PC-3 (cell line): ENCODE measurements at regions of chr2 and their contacts with region 1.

Region 1: GRCh38 chr2:9799665-9800632 is 43.3 kb upstream of the TAF1B start:
- DNase-seq: peak; percentile 93
- ATAC-seq: peak; percentile 72
- H3K4me3 ChIP-seq: no peak overlapping the region
- H3K27ac ChIP-seq: peak overlapping the region; percentile 97
- H3K4me1 ChIP-seq: peaks cover 63% of the 10 kb centered on the region
- H3K27me3 ChIP-seq: no peaks in the 10 kb centered on the region
- CTCF ChIP-seq: peak; percentile 97

Region 2: DNA sequence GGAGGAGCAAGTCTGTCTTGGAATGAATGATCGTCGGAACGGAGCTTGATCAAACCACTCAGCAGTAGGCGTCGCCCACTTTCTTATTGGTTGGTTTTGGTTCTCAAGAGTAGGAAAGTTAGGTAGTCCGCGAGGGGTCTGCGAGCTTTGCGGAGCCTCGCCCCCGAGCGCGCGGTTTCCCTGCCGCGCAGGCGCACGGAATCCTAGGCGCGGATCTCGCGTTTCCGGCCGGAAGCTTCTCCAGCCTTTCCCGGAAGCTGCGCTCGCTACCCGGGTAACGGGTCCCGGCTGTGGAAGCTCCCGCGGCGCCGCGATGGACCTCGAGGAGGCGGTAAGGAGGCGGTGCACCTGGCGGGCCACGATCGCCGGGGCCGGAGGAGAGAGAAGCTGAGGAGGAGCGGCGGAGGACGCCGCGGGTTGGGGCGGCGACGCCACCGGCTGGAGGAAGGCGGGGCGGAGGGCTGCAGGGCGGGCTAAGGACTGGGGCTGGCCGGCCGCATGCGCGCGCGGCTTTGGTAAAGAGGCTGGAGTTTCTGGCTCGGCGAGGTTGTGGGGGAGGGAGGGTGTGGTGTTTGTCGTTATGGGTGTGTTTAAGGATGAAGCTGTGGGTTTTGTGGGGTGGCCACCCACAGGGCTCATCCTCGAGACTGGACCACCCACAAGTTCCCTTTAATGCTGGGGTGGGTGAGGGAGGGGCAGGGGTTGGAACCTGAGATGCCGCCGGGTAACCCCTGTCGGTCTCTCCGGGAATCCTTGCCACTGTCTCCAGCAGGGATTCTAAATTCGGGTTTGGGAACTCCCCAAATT is 43.5 kb after region 1 on chr2 and contains the start of gene TAF1B:
- CTCF ChIA-PET with region 1: interaction called, 3 read pairs
- POLR2A ChIA-PET with region 1: no interaction called
- intact Hi-C with region 1: loop called (anchors 5 kb)
- DNase-seq: peak; percentile 96
- ATAC-seq: peak; percentile 78
- H3K4me3 ChIP-seq: peak within 1 kb of the TSS; percentile 75
- H3K27ac ChIP-seq: peak within 1 kb of the TSS; percentile 88
- H3K4me1 ChIP-seq: peaks cover 35% of the 10 kb centered on the region
- H3K27me3 ChIP-seq: no peaks in the 10 kb centered on the region
- CTCF ChIP-seq: 0 out of 2 replicates have a peak, but pooled peaks have one; percentile 30
- total RNA-seq, gene TAF1B: 24.1 and 39.5 TPM in 2 replicates

Region 3: GRCh38 chr2:9914384-9915065 is 114.6 kb after region 1 on chr2:
- CTCF ChIA-PET with region 1: no interaction called
- POLR2A ChIA-PET with region 1: no interaction called
- intact Hi-C with region 1: loop called (anchors 1 kb)
- DNase-seq: peak; percentile 92
- ATAC-seq: peak; percentile 100
- H3K4me3 ChIP-seq: no peak overlapping the region
- H3K27ac ChIP-seq: 0 out of 2 replicates have a peak overlapping the region, but pooled peaks have one; percentile 17
- H3K4me1 ChIP-seq: peaks cover 11% of the 10 kb centered on the region
- H3K27me3 ChIP-seq: no peaks in the 10 kb centered on the region
- CTCF ChIP-seq: peak; percentile 72

Region 4: DNA sequence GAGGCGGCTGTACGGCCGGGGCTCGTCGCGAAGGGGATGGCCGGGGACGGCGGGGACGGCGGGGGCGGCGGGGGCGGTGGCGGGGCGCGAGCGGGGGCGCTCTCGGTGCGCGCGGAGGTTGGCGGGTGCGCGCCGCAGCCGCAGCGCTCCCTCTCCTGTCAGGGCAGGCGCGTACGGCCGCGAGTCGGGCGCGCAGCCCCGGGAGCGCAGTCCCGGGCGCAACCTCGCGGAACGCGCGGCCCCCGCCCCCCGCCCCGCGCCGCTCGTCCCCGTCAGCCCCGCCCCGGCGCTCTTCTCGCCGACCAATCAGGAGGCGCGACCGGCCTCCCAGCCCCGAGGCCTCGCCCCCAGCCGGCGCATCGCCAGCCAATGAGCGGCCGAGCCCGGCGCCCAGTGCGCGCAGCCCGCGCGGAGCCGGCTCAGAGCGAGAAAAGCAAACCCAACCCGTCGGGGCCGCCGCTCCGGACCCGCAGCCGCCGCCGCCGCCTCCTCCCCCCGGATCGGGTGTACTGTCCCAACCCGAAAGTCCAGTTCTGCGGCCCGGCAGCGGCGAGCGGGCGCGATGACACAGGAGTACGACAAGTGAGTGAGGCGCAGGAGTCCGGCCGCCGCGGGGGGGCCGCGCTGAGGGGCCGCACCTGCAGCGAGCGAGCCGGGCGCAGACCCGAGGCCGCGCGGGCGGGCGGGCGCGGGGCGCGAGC is 151.5 kb after region 1 on chr2 and contains the start of gene GRHL1:
- CTCF ChIA-PET with region 1: no interaction called
- POLR2A ChIA-PET with region 1: no interaction called
- intact Hi-C with region 1: loop called (anchors 5 kb)
- DNase-seq: peak; percentile 95
- ATAC-seq: peak; percentile 83
- H3K4me3 ChIP-seq: peak within 1 kb of the TSS; percentile 76
- H3K27ac ChIP-seq: no peak within 1 kb of the TSS
- H3K4me1 ChIP-seq: peaks cover 29% of the 10 kb centered on the region
- H3K27me3 ChIP-seq: no peaks in the 10 kb centered on the region
- CTCF ChIP-seq: no peak
- total RNA-seq, gene GRHL1: 9.3 and 10.3 TPM in 2 replicates

Region 5: DNA sequence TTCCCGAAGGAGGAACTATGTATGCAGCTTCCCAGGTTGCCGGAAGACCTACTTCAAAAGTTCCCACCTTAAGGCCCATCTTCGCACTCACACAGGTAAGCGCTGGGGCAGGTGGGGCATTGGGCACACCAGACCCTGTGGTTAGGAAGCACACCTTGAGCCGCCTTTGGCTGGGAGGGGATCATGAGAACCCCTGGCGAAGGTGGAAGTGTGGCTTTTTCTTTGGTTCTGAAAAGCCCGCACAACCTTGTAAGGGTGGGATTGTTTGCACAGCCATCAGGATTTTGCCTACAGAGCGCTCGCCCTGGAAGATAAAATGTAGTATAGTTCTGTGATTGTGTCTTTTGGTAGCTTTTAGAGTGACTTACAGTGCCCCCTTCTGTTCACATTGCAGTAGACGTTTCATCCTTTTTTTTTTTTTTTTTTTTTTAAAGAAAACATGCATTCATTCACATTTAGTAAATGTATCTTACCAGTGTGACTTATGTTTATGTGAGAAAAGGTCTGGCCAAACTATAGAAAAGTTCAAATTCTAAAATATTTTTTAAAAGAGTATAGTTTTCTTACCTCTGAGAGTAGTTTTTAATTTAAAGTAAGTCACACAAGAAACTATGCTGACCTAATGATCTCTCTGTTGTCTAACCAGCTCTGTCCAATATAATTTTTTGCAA is 248.7 kb after region 1 on chr2:
- CTCF ChIA-PET with region 1: no interaction called
- POLR2A ChIA-PET with region 1: no interaction called
- intact Hi-C with region 1: loop called (anchors 1 kb)
- DNase-seq: peak; percentile 55
- ATAC-seq: no peak
- H3K4me3 ChIP-seq: no peak overlapping the region
- H3K27ac ChIP-seq: no peak overlapping the region
- H3K4me1 ChIP-seq: peaks cover 5% of the 10 kb centered on the region
- H3K27me3 ChIP-seq: no peaks in the 10 kb centered on the region
- CTCF ChIP-seq: peak; percentile 80